ENCODE measurements at regions of chr17 and their contacts with region 1.

Region 1: DNA sequence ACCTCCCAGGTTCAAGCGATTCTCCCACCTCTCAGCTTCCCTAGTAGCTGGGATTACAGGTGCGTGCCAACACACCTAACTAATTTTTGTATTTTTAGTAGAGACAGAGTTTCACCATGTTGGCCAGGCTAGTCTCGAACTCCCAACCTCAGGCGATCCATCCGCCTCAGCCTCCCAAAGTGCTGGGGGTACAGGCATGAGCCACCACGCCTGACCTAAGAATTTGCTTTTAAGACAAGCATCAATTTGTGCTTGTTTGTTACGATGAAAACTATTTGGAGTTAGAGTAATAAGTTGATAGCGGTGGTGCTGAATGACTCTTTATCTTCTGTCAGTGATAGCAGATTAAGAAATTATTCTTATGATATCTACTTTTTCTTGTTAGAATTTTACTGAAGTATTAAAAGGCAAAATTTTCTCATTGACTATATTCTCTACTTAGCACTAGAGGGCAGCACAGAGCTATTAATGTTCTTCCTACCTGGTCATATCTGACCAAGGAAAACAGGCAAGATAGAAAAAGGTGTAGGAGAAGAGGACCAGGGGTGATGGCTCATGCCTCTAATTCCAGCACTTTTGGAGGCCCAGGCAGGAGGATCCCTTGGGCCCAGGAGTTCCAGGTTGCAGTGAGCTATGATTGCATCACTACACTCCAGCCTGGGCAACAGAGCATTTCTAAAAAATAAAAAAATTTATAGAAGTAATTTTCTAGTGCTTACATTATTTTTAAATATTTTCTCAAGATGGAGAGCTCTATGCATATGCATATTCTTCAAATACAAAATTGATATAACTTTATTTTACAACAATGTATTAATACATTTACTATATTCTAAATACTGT is 24.5 kb downstream of the STXBP4 start:
- DNase-seq: peak; percentile 54
- ATAC-seq: peak; percentile 75
- H3K4me3 ChIP-seq: no peak overlapping the region
- H3K27ac ChIP-seq: no peak overlapping the region
- H3K4me1 ChIP-seq: no peaks in the 10 kb centered on the region
- H3K27me3 ChIP-seq: no peaks in the 10 kb centered on the region
- CTCF ChIP-seq: peak; percentile 72
- POLR2A ChIP-seq: no peak
- RAD21 ChIP-seq: peak; percentile 69

Region 2: GRCh38 chr17:55295411-55296170 is 302.6 kb after region 1 on chr17:
- CTCF ChIA-PET with region 1: interaction called, 7 read pairs
- POLR2A ChIA-PET with region 1: no interaction called
- dilution Hi-C with region 1: no loop called
- in situ Hi-C with region 1: loop called (anchors 5 kb)
- intact Hi-C with region 1: loop called (anchors 1 kb)
- DNase-seq: peak; percentile 43
- ATAC-seq: peak; percentile 96
- H3K4me3 ChIP-seq: no peak overlapping the region
- H3K27ac ChIP-seq: no peak overlapping the region
- H3K4me1 ChIP-seq: no peaks in the 10 kb centered on the region
- H3K27me3 ChIP-seq: peaks cover 4% of the 10 kb centered on the region; the same call in 1 of the 2 replicates
- CTCF ChIP-seq: peak; percentile 83
- POLR2A ChIP-seq: no peak
- RAD21 ChIP-seq: peak; percentile 77

Region 3: GRCh38 chr17:55303701-55304145 is 310.7 kb after region 1 on chr17:
- CTCF ChIA-PET with region 1: interaction called, 3 read pairs
- POLR2A ChIA-PET with region 1: no interaction called
- dilution Hi-C with region 1: no loop called
- in situ Hi-C with region 1: loop called (anchors 5 kb)
- intact Hi-C with region 1: no loop called
- DNase-seq: peak; percentile 13
- ATAC-seq: no peak; the same call in 1 of the 2 replicates
- H3K4me3 ChIP-seq: no peak overlapping the region
- H3K27ac ChIP-seq: no peak overlapping the region
- H3K4me1 ChIP-seq: no peaks in the 10 kb centered on the region
- H3K27me3 ChIP-seq: peaks cover 2% of the 10 kb centered on the region
- CTCF ChIP-seq: peak; percentile 19; the same call in 1 of the 2 replicates
- POLR2A ChIP-seq: no peak
- RAD21 ChIP-seq: no peak

Region 4: DNA sequence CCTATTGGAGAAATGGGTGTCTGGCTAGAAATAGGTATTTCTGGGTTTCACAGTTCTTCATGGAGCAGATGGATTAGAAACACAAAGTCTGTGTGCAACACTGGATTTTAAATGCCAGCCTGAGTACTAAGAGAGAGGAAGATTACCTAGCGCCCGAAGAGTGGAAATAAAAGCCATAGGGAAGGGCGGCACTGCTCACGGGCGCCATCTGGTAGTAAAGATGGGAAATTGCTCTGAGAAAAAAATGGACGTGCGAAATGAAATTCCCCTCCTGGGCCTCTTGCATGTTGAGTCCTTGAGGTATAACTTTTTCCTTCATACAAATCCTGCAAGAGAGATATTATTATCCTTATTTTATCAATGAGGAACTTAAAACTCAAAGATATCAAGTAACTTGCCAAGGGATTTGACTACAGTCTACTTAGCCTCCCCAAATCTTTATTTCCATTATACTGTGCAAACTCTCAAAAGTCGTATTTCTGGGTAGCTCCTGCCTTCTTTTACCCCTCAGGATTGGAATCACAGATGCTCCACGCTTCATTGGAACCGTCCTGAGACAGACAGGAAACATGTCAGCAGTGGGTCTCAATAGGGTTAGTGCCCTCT is 355.8 kb after region 1 on chr17:
- CTCF ChIA-PET with region 1: interaction called, 10 read pairs
- POLR2A ChIA-PET with region 1: interaction called, 5 read pairs
- dilution Hi-C with region 1: no loop called
- in situ Hi-C with region 1: no loop called
- intact Hi-C with region 1: loop called (anchors 1 kb)
- DNase-seq: peak; percentile 43
- ATAC-seq: peak; percentile 90
- H3K4me3 ChIP-seq: no peak overlapping the region
- H3K27ac ChIP-seq: no peak overlapping the region
- H3K4me1 ChIP-seq: no peaks in the 10 kb centered on the region
- H3K27me3 ChIP-seq: peaks cover 9% of the 10 kb centered on the region
- CTCF ChIP-seq: peak; percentile 85
- POLR2A ChIP-seq: no peak
- RAD21 ChIP-seq: peak; percentile 68